Panc1 (cell line): ENCODE measurements at regions of chr12 and their contacts with region 1.

Region 1: GRCh38 chr12:120317224-120318105 is 10.1 kb downstream of the PLA2G1B start:
- DNase-seq: peak; percentile 94
- ATAC-seq: peak; percentile 99
- H3K4me3 ChIP-seq: peak overlapping the region; percentile 68 to 77
- H3K27ac ChIP-seq: peak overlapping the region; percentile 91
- H3K4me1 ChIP-seq: peaks cover 4% of the 10 kb centered on the region; the same call in 1 of the 2 replicates
- H3K27me3 ChIP-seq: no peaks in the 10 kb centered on the region
- CTCF ChIP-seq: peak; percentile 82

Region 2: GRCh38 chr12:120301962-120302815 is 15.3 kb before region 1 on chr12 and contains the start of gene SIRT4:
- CTCF ChIA-PET with region 1: interaction called, 10 read pairs
- POLR2A ChIA-PET with region 1: no interaction called
- in situ Hi-C with region 1: no loop called
- intact Hi-C with region 1: no loop called
- DNase-seq: peak; percentile 89
- ATAC-seq: peak; percentile 99
- H3K4me3 ChIP-seq: peak within 1 kb of the TSS; percentile 65 to 94
- H3K27ac ChIP-seq: peak within 1 kb of the TSS; percentile 89
- H3K4me1 ChIP-seq: no peaks in the 10 kb centered on the region
- H3K27me3 ChIP-seq: no peaks in the 10 kb centered on the region
- CTCF ChIP-seq: peak; percentile 98
- total RNA-seq, gene SIRT4: 1.5 TPM